Endothelial cell of umbilical vein (primary cell): ENCODE measurements at regions of chr14 and their contacts with region 1.

Region 1: GRCh38 chr14:78836777-78837176 is 666.6 kb downstream of the NRXN3 start:
- DNase-seq: peak; percentile 57
- H3K4me3 ChIP-seq: no peak overlapping the region
- H3K27ac ChIP-seq: no peak overlapping the region
- H3K4me1 ChIP-seq: no peaks in the 10 kb centered on the region
- H3K27me3 ChIP-seq: peaks cover 0 to 4% of the 10 kb centered on the region in 2 experiments
- CTCF ChIP-seq: peak; percentile 42 to 45
- POLR2A ChIP-seq: no peak

Region 2: GRCh38 chr14:77862154-77862786 is 974.5 kb before region 1 on chr14:
- CTCF ChIA-PET with region 1: no interaction called
- POLR2A ChIA-PET with region 1: no interaction called
- dilution Hi-C with region 1: no loop called
- intact Hi-C with region 1: loop called (anchors 1 kb)
- DNase-seq: peak; percentile 57
- H3K4me3 ChIP-seq: no peak overlapping the region
- H3K27ac ChIP-seq: no peak overlapping the region
- H3K4me1 ChIP-seq: no peaks in the 10 kb centered on the region
- H3K27me3 ChIP-seq: no peaks in the 10 kb centered on the region
- CTCF ChIP-seq: peak; percentile 97 to 99
- POLR2A ChIP-seq: no peak

Region 3: GRCh38 chr14:78022059-78022458 is 814.7 kb before region 1 on chr14:
- CTCF ChIA-PET with region 1: interaction called, 4 read pairs
- POLR2A ChIA-PET with region 1: no interaction called
- dilution Hi-C with region 1: no loop called
- intact Hi-C with region 1: loop called (anchors 1 kb)
- DNase-seq: peak; percentile 44
- H3K4me3 ChIP-seq: no peak overlapping the region
- H3K27ac ChIP-seq: no peak overlapping the region
- H3K4me1 ChIP-seq: no peaks in the 10 kb centered on the region
- H3K27me3 ChIP-seq: no peaks in the 10 kb centered on the region
- CTCF ChIP-seq: peak; percentile 54 to 61
- POLR2A ChIP-seq: no peak

Region 4: GRCh38 chr14:78448164-78449094 is 388.3 kb before region 1 on chr14:
- CTCF ChIA-PET with region 1: interaction called, 3 read pairs
- POLR2A ChIA-PET with region 1: no interaction called
- dilution Hi-C with region 1: no loop called
- intact Hi-C with region 1: loop called (anchors 1 kb)
- DNase-seq: peak; percentile 47
- H3K4me3 ChIP-seq: no peak overlapping the region
- H3K27ac ChIP-seq: no peak overlapping the region
- H3K4me1 ChIP-seq: no peaks in the 10 kb centered on the region
- H3K27me3 ChIP-seq: no peaks in the 10 kb centered on the region
- CTCF ChIP-seq: peak; percentile 63 to 66
- POLR2A ChIP-seq: no peak

Region 5: DNA sequence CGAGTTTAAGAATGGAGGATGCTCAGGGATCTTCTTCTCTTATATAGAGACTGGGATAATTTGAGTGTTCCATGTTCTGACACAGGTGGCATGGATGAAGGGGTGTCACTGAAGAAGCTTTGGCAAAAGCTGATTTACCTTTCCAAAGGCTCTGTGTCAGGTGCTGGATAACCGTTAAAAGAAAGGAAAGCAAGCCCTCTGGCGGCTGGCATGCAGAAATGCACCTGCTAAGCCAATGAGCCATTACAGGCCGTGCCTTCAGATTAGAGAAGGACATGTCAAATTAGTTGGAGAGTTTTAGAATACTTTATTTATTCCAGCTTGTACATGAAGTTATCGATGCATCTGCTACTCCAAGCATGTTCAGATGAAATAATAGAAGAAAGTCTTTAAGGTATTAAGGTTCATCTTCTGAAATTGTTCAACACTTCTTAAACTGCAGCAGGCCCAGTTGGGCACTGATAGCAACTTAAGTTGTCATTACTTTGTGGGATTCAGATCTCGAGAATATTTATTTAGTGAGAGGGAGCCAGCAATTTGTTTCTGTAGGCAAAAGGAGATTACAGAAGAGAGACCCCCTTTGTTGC is 11.6 kb after region 1 on chr14:
- CTCF ChIA-PET with region 1: interaction called, 12 read pairs
- POLR2A ChIA-PET with region 1: no interaction called
- dilution Hi-C with region 1: no loop called
- intact Hi-C with region 1: no loop called
- DNase-seq: peak; percentile 35
- H3K4me3 ChIP-seq: no peak overlapping the region
- H3K27ac ChIP-seq: no peak overlapping the region
- H3K4me1 ChIP-seq: no peaks in the 10 kb centered on the region
- H3K27me3 ChIP-seq: no peaks in the 10 kb centered on the region
- CTCF ChIP-seq: peak; percentile 77 to 80
- POLR2A ChIP-seq: no peak